ENCODE measurements at regions of chr15 and their contacts with region 1.

Region 1: GRCh38 chr15:67110361-67110781 is 45.0 kb downstream of the SMAD3 start:
- DNase-seq: no peak
- ATAC-seq: peak; percentile 29
- H3K4me3 ChIP-seq: no peak overlapping the region
- H3K4me3 Mint-ChIP-seq: peak overlapping the region; percentile 25
- H3K27ac ChIP-seq: no peak overlapping the region
- H3K27ac Mint-ChIP-seq: peak overlapping the region; percentile 69
- H3K4me1 ChIP-seq: peaks cover 71% of the 10 kb centered on the region
- H3K4me1 Mint-ChIP-seq: peaks cover 30% of the 10 kb centered on the region
- H3K27me3 ChIP-seq: no peaks in the 10 kb centered on the region
- H3K27me3 Mint-ChIP-seq: no peaks in the 10 kb centered on the region
- CTCF ChIP-seq: no peak

Region 2: DNA sequence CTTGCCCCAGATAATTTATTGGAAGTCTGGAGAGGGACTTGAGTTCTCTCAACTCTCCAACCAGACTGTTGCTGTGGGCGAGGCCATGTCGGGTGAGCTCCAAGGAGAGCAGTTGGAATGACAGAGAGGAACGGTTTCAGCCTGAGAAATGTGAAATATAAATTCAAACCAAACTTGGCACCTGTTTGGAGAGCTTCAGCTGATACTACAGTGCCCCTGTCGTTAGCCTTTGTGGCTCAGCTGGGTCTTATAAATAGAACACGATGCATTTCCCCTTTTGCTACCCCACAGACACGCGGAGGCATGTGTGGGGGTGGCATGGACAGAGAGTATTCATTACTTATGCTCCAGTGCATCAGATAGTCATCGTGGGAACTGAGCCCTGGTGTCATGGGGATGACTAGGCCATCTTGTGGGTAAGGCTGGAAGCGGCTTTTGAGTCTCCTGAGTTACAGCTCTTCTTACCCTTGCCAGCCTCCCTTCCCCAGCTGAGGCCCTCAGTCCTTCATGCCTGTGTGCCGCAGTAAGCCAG is 29.4 kb before region 1 on chr15:
- CTCF ChIA-PET with region 1: interaction called, 3 read pairs
- POLR2A ChIA-PET with region 1: interaction called, 105 read pairs
- intact Hi-C with region 1: loop called in 1 of 2 experiments (anchors 5 kb)
- DNase-seq: peak in 6 of 14 experiments; percentile 23 to 83 (median 66)
- ATAC-seq: peak; percentile 45
- H3K4me3 ChIP-seq: no peak overlapping the region
- H3K4me3 Mint-ChIP-seq: peak overlapping the region; percentile 32
- H3K27ac ChIP-seq: peak overlapping the region; percentile 45 to 72
- H3K27ac Mint-ChIP-seq: peak overlapping the region; percentile 89
- H3K4me1 ChIP-seq: peaks cover 98% of the 10 kb centered on the region
- H3K4me1 Mint-ChIP-seq: peaks cover 96% of the 10 kb centered on the region
- H3K27me3 ChIP-seq: no peaks in the 10 kb centered on the region
- H3K27me3 Mint-ChIP-seq: no peaks in the 10 kb centered on the region
- CTCF ChIP-seq: no peak

Region 3: DNA sequence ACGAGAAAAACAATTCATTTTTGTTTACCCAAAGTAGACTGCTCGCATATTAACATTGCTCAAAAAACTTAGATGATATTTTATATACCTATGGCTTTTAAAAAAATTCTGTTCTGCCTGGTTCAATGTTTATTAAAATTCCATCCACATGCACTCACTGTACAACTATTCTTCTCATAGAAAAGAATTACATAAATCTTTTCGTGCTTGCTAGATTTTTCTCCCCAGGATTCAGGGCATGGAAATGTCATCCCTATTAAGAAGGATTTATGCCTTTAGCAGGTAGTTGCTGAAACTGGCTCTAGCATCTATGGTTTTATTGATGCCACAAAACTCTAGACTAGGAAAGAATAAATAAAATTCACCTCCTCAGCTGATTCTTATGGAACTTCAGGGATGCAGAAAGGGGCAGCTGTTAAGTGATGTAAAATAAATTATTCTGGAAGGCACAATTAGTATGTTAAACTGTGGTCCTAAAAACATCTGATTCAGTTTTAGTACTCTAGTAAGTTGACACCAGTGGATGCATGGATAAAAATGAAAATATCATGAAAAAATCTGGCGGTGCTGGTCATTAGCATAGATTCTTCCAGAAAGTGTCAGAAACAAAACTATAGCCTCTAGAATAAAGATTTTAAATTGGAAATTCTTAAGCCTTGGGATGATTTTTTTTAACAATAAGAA is 102.5 kb after region 1 on chr15:
- CTCF ChIA-PET with region 1: no interaction called
- POLR2A ChIA-PET with region 1: no interaction called
- intact Hi-C with region 1: no loop called
- DNase-seq: no peak
- ATAC-seq: no peak
- H3K4me3 ChIP-seq: no peak overlapping the region
- H3K4me3 Mint-ChIP-seq: no peak overlapping the region
- H3K27ac ChIP-seq: no peak overlapping the region
- H3K27ac Mint-ChIP-seq: no peak overlapping the region
- H3K4me1 ChIP-seq: no peaks in the 10 kb centered on the region
- H3K4me1 Mint-ChIP-seq: no peaks in the 10 kb centered on the region
- H3K27me3 ChIP-seq: no peaks in the 10 kb centered on the region
- H3K27me3 Mint-ChIP-seq: no peaks in the 10 kb centered on the region
- CTCF ChIP-seq: no peak